GM12878 (cell line): ENCODE measurements at regions of chr16 and their contacts with region 1.

Region 1: GRCh38 chr16:4506450-4506849 is 30.3 kb downstream of the HMOX2 start:
- DNase-seq: peak; percentile 39
- ATAC-seq: peak; percentile 92
- H3K4me3 ChIP-seq: no peak overlapping the region
- H3K27ac ChIP-seq: peak overlapping the region; percentile 79; the same call in 1 of the 2 replicates
- H3K4me1 ChIP-seq: peaks cover 20% of the 10 kb centered on the region
- H3K27me3 ChIP-seq: no peaks in the 10 kb centered on the region
- CTCF ChIP-seq: peak; percentile 85 to 93 (median 93)
- EP300 ChIP-seq: no peak
- POLR2A ChIP-seq: no peak
- RAD21 ChIP-seq: peak; percentile 95

Region 2: DNA sequence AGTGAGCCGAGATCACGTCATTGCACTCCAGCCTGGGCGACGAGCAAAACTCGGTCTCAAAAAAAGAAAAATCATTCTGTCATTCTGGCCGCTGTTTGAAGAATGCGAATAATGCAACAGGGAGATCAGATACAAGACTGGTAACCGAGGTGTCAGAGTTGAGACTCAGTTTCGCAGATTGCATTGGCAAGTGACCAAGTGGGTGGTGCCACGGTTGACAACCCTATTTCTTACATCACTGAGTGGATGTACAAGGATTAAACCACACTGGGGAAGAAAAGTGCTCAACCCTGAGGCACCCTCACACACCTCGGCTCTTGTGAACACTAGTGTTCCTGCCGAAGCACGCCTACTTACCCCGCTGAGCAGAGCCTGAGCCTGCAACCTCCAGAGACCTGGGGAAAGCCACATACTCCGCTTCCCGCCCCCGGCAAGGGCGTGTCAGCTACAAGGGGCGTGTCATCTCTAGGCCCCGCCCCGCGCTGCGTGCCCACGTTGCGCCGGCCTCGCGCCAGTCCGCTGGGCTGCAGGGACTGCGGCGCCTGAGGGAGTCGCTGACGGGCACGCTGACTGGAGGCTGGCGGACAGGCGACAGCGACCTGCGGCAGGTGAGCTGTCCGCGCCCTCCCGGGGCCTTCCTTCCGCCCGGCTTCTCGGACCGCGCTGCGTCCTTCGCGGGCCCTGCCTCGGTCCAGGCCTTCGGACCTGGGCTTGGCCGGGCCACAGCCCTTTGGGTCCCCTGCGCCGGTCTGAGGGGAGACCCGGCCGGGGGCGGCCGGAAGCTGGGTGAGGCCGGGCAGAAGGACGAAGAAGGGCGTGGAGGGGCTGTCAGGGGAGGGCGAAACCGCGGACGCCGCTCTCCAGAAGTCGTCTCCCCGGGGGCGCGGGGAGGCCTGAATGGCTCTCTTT is 30.3 kb before region 1 on chr16 and contains the start of gene HMOX2:
- CTCF ChIA-PET with region 1: interaction called, 12 read pairs
- POLR2A ChIA-PET with region 1: interaction called, 10 read pairs
- RAD21 ChIA-PET with region 1: interaction called, 14 read pairs
- SMC1A ChIA-PET with region 1: interaction called, 4 read pairs
- in situ Hi-C with region 1: no loop called
- intact Hi-C with region 1: loop called (anchors 2 kb)
- DNase-seq: peak; percentile 90
- ATAC-seq: peak; percentile 90
- H3K4me3 ChIP-seq: peak within 1 kb of the TSS; percentile 98
- H3K27ac ChIP-seq: peak within 1 kb of the TSS; percentile 77
- H3K4me1 ChIP-seq: peaks cover 4% of the 10 kb centered on the region; the same call in 1 of the 2 replicates
- H3K27me3 ChIP-seq: no peaks in the 10 kb centered on the region
- CTCF ChIP-seq: peak; percentile 52 to 63 (median 54); a peak in 5 of 6 replicates
- EP300 ChIP-seq: 0 out of 4 replicates have a peak, but pooled peaks of 1 of the 2 experiments have one; percentile 8
- POLR2A ChIP-seq: peak; percentile 99
- RAD21 ChIP-seq: no peak
- polyA plus RNA-seq, gene HMOX2: 26.4 to 37.7 TPM

Region 3: DNA sequence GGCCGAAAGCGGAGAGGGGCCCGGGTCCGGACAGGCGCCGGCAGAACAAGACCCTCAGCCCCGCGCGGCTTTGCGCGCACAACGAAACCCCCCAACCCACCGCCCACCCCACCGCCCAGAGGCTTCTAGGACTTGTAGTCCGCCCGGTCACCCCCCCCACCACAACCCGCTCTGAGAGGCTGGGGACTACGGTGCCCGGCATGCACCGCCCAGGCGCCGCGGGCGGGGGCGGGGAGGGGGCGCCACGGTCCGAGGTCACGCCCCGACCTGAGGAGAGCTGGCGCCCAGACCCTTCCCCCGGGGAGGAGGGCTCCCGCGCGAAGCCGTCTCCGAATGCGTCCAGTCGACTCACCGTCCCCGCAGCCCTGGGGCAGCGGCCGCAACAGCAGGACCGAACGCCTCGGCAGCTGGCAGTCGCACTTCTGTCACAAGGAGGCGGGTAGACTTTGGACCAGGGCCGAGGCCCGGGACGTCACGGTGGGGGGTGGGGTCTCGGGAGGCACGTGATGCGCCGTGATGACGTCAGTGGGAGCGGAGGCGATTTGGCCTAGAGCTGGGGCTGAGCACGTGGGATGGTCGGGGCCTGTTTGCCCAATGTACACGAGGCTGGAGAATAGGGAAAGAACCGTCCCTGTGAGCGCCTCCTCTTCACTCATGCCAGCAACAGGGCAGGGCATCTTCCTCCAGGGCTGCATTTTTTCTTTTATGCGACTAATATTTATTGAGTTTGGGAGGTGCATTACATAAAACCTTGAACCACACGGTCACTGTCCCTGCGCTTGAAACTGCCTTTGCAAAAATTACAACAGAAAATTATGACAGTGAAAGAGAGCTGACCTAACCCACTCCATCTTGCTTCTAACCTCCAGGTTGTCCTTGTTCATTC is 32.1 kb after region 1 on chr16 and contains the start of gene CDIP1:
- CTCF ChIA-PET with region 1: interaction called, 21 read pairs
- POLR2A ChIA-PET with region 1: interaction called, 6 read pairs
- RAD21 ChIA-PET with region 1: interaction called, 3 read pairs
- SMC1A ChIA-PET with region 1: interaction called, 8 read pairs
- in situ Hi-C with region 1: no loop called
- intact Hi-C with region 1: no loop called
- DNase-seq: peak; percentile 82
- ATAC-seq: peak; percentile 92
- H3K4me3 ChIP-seq: peak within 1 kb of the TSS; percentile 70
- H3K27ac ChIP-seq: peak within 1 kb of the TSS; percentile 13; the same call in 1 of the 2 replicates
- H3K4me1 ChIP-seq: peaks cover 11% of the 10 kb centered on the region
- H3K27me3 ChIP-seq: no peaks in the 10 kb centered on the region; a peak in 1 of 4 replicates
- CTCF ChIP-seq: no peak
- EP300 ChIP-seq: peak; percentile 19 to 46; a peak in 1 of 4 replicates
- POLR2A ChIP-seq: peak; percentile 99
- RAD21 ChIP-seq: no peak
- polyA plus RNA-seq, gene CDIP1: 6.1 to 7.2 TPM

Region 4: GRCh38 chr16:4550591-4550990 is 44.1 kb after region 1 on chr16:
- CTCF ChIA-PET with region 1: interaction called, 90 read pairs
- POLR2A ChIA-PET with region 1: interaction called, 7 read pairs
- RAD21 ChIA-PET with region 1: interaction called, 26 read pairs
- SMC1A ChIA-PET with region 1: interaction called, 41 read pairs
- in situ Hi-C with region 1: no loop called
- intact Hi-C with region 1: loop called (anchors 1 kb)
- DNase-seq: no peak
- ATAC-seq: no peak
- H3K4me3 ChIP-seq: no peak overlapping the region
- H3K27ac ChIP-seq: no peak overlapping the region
- H3K4me1 ChIP-seq: no peaks in the 10 kb centered on the region
- H3K27me3 ChIP-seq: peaks cover 0 to 2% of the 10 kb centered on the region in 2 experiments; a peak in 1 of 4 replicates
- CTCF ChIP-seq: no peak
- EP300 ChIP-seq: no peak
- POLR2A ChIP-seq: no peak
- RAD21 ChIP-seq: no peak

Region 5: GRCh38 chr16:4624015-4624826 is 117.8 kb after region 1 on chr16 and contains the start of gene MGRN1:
- CTCF ChIA-PET with region 1: interaction called, 43 read pairs
- POLR2A ChIA-PET with region 1: interaction called, 11 read pairs
- RAD21 ChIA-PET with region 1: interaction called, 22 read pairs
- SMC1A ChIA-PET with region 1: interaction called, 9 read pairs
- in situ Hi-C with region 1: no loop called
- intact Hi-C with region 1: loop called (anchors 10 kb)
- DNase-seq: peak; percentile 96
- ATAC-seq: peak; percentile 88
- H3K4me3 ChIP-seq: peak within 1 kb of the TSS; percentile 86
- H3K27ac ChIP-seq: peak within 1 kb of the TSS; percentile 97
- H3K4me1 ChIP-seq: peaks cover 16% of the 10 kb centered on the region
- H3K27me3 ChIP-seq: no peaks in the 10 kb centered on the region
- CTCF ChIP-seq: peak; percentile 95 to 99 (median 99); a peak in 5 of 6 replicates
- EP300 ChIP-seq: no peak
- POLR2A ChIP-seq: no peak
- RAD21 ChIP-seq: peak; percentile 66
- polyA plus RNA-seq, gene MGRN1: 0.35 to 0.77 TPM

Region 6: DNA sequence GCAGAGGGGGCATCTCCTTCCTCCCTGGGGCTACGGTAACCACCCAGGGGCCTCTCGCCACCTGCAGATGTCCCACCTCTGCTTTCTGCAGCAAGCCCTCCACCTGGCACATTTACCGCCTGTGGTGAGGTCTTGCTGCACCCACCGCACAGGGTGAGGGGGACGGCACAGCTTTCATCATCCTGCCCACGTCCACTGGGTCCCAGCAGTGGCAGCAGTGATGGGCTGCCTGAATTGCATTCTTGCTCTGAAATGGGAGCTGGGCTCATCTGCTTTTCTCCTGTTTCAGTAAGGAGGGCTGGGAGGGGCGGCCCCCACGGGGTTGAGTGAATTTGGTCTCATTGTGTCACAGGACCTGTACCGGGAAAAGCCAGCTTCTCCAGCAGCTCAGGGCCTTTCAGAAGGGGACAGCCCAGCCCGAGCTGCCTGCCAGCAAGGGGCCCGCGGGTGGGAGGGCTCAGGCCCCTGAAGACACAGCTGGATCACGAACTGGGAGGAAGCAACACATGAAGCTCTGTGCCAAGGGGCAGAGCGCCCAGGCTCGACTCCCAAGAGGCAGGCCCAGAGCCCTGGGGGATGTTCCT is 240.6 kb after region 1 on chr16:
- CTCF ChIA-PET with region 1: no interaction called
- POLR2A ChIA-PET with region 1: no interaction called
- RAD21 ChIA-PET with region 1: no interaction called
- SMC1A ChIA-PET with region 1: no interaction called
- in situ Hi-C with region 1: no loop called
- intact Hi-C with region 1: no loop called
- DNase-seq: no peak
- ATAC-seq: peak; percentile 15; the same call in 2 of the 3 replicates
- H3K4me3 ChIP-seq: no peak overlapping the region
- H3K27ac ChIP-seq: peak overlapping the region; percentile 2; the same call in 1 of the 2 replicates
- H3K4me1 ChIP-seq: peaks cover 12% of the 10 kb centered on the region
- H3K27me3 ChIP-seq: no peaks in the 10 kb centered on the region
- CTCF ChIP-seq: no peak
- EP300 ChIP-seq: no peak
- POLR2A ChIP-seq: peak; percentile 41
- RAD21 ChIP-seq: no peak